Naive thymus-derived CD4-positive, alpha-beta T cell (primary cell): ENCODE measurements at regions of chr1 and their contacts with region 1.

Region 1: DNA sequence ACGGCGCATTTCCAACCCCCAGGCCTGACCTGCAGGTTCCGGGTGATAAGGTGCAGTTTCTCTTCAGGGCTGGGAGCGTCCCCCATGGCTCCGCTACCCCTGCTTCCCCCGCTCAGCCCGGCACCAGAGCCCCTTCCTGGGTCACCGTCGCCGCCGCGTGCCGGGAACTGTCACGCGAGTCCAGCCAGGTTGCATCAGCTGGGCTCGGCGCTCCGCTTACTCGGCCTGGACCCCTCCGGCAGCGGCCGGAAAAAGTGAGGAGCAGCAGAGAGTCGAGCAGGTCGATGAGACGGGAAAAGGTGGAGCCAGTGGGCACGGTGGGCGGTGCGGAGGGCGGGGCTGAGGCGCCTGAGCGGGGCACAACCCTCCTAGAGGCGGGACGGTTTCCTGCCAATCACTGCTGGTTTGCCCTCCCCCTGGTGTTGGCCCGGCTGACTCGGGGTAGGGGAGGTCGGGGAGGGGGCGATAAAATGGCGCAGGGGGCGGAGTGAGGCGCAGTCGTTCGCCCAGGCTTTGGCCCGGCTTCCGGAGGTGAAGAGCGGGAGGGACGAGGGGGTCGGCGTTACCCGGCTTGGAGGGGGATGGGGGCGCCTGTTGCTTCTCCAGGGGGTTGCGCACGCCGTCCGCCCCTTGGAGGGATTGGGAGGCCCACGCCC is at the starts of genes S100PBP and YARS1:
- DNase-seq: peak; percentile 98 to 100 (median 99)
- ATAC-seq: peak; percentile 99
- H3K4me3 ChIP-seq: peak within 1 kb of the TSS; percentile 86
- H3K4me3 Mint-ChIP-seq: peak within 1 kb of the TSS; percentile 85 to 99 (median 96)
- H3K27ac ChIP-seq: peak within 1 kb of the TSS; percentile 85
- H3K27ac Mint-ChIP-seq: peak within 1 kb of the TSS; percentile 82 to 96 (median 92)
- H3K4me1 ChIP-seq: peaks cover 26 to 36% of the 10 kb centered on the region in 2 donors
- H3K4me1 Mint-ChIP-seq: peaks cover 35 to 72% (median 59%) of the 10 kb centered on the region in 7 donors
- H3K27me3 ChIP-seq: no peaks in the 10 kb centered on the region
- H3K27me3 Mint-ChIP-seq: no peaks in the 10 kb centered on the region
- total RNA-seq, gene S100PBP: 36.3 to 69.0 (median 60.2) TPM
- total RNA-seq, gene YARS1: 70.2 to 175 (median 86.8) TPM

Region 2: GRCh38 chr1:31296486-31297276 is 1520.6 kb before region 1 on chr1 and contains the starts of genes SNRNP40 and ZCCHC17:
- CTCF ChIA-PET with region 1: no interaction called
- POLR2A ChIA-PET with region 1: no interaction called
- intact Hi-C with region 1: loop called in 1 of 2 experiments (anchors 2 kb)
- DNase-seq: peak; percentile 73 to 99 (median 98)
- ATAC-seq: peak; percentile 97
- H3K4me3 ChIP-seq: peak within 1 kb of the TSS; percentile 89
- H3K4me3 Mint-ChIP-seq: no peak within 1 kb of the TSS
- H3K27ac ChIP-seq: peak within 1 kb of the TSS; percentile 92
- H3K27ac Mint-ChIP-seq: peak within 1 kb of the TSS in 1 of 9 donors; percentile 84
- H3K4me1 ChIP-seq: peaks cover 18 to 24% of the 10 kb centered on the region in 2 donors
- H3K4me1 Mint-ChIP-seq: peaks cover 12 to 41% (median 27%) of the 10 kb centered on the region in 7 donors
- H3K27me3 ChIP-seq: no peaks in the 10 kb centered on the region
- H3K27me3 Mint-ChIP-seq: no peaks in the 10 kb centered on the region
- total RNA-seq, gene SNRNP40: 53.5 to 88.5 (median 62.1) TPM
- total RNA-seq, gene ZCCHC17: 10.3 to 23.8 (median 20.1) TPM

Region 3: GRCh38 chr1:32107742-32108661 is 709.3 kb before region 1 on chr1 and contains the start of gene KPNA6:
- CTCF ChIA-PET with region 1: no interaction called
- POLR2A ChIA-PET with region 1: no interaction called
- intact Hi-C with region 1: loop called in 1 of 2 experiments (anchors 5 kb)
- DNase-seq: peak; percentile 75 to 95 (median 93)
- ATAC-seq: peak; percentile 94
- H3K4me3 ChIP-seq: peak within 1 kb of the TSS; percentile 75
- H3K4me3 Mint-ChIP-seq: peak within 1 kb of the TSS; percentile 95 to 100 (median 99)
- H3K27ac ChIP-seq: peak within 1 kb of the TSS; percentile 94
- H3K27ac Mint-ChIP-seq: peak within 1 kb of the TSS; percentile 93 to 99 (median 98)
- H3K4me1 ChIP-seq: peaks cover 37 to 40% of the 10 kb centered on the region in 2 donors
- H3K4me1 Mint-ChIP-seq: peaks cover 27 to 63% (median 47%) of the 10 kb centered on the region in 7 donors
- H3K27me3 ChIP-seq: no peaks in the 10 kb centered on the region
- H3K27me3 Mint-ChIP-seq: no peaks in the 10 kb centered on the region
- total RNA-seq, gene KPNA6: 47.4 to 63.7 (median 51.6) TPM

Region 4: DNA sequence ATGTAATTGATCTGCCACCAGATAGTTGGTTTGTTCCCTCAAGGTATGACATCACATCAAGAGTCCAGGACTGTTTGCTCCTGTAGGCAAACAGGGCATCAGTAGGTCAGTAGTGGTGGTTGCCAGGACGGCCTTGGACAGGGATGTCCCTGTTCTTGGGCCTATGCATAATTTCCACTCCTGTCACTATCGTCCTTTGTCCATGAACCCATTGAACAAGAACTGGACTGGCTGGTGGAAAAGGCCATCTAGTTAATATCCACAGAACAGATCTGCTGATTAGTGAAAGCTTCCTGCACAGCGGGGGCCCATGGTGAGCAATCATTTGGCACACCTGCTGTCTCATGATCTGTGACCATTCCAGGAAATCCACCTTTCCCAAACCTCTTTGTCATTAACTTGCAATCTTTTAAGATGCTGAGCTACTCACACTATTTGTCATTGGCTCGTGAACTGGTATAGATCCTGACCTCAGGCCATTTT is 410.6 kb before region 1 on chr1:
- CTCF ChIA-PET with region 1: no interaction called
- POLR2A ChIA-PET with region 1: no interaction called
- intact Hi-C with region 1: no loop called
- DNase-seq: no peak
- ATAC-seq: no peak
- H3K4me3 ChIP-seq: no peak overlapping the region
- H3K4me3 Mint-ChIP-seq: no peak overlapping the region
- H3K27ac ChIP-seq: no peak overlapping the region
- H3K27ac Mint-ChIP-seq: no peak overlapping the region
- H3K4me1 ChIP-seq: no peaks in the 10 kb centered on the region
- H3K4me1 Mint-ChIP-seq: peaks cover 0 to 3% (median 0%) of the 10 kb centered on the region in 7 donors
- H3K27me3 ChIP-seq: no peaks in the 10 kb centered on the region
- H3K27me3 Mint-ChIP-seq: peaks cover 0 to 17% (median 0%) of the 10 kb centered on the region in 5 donors

Region 5: DNA sequence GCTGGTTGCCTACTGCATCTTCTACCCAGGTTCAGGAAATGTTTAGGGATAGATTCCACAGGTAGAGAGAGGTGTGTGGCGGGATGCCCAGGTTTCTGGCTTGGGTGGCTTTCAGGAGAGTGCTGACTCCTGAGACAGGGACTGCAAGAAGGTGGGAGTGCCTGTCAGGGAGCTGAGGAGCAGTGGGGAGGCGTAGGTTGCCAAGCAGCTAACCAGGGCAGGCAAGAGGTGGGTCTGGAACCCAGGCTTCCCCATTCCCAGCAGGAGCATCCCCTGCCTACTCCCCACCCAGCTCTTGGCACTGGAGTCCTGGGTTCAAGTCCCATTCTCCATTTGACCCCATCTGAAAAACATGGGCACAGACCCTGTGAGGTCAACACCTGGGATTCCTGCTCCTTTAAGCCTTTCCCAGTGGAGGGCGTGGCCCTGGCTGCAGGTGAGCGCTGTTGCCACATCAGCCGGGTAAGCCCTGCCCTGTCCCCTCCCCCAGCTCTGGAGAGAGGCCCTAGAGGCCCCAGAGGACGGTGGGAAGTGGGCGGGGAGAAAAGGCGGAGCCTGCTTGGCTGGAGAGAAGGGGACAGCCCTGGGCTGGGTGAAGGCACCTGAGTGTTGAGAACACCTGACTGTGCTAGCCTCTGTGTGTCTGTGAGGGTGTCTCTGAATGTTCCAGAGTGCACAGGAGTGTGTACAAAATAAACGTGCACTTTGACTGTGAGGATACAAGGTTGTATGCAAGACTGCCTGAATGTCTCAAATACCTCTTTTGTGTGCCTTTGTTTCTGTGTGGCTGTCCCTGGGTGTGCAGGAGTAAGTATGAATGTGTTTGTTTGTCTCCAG is 100.8 kb before region 1 on chr1:
- CTCF ChIA-PET with region 1: no interaction called
- POLR2A ChIA-PET with region 1: no interaction called
- intact Hi-C with region 1: loop called in 1 of 2 experiments (anchors 1 kb)
- DNase-seq: peak in 6 of 9 donors; percentile 18 to 67 (median 28)
- ATAC-seq: peak; percentile 25
- H3K4me3 ChIP-seq: no peak overlapping the region
- H3K4me3 Mint-ChIP-seq: peak overlapping the region in 1 of 10 donors; percentile 30
- H3K27ac ChIP-seq: no peak overlapping the region
- H3K27ac Mint-ChIP-seq: peak overlapping the region in 3 of 9 donors; percentile 13 to 47 (median 41)
- H3K4me1 ChIP-seq: peaks cover 0 to 5% of the 10 kb centered on the region in 2 donors
- H3K4me1 Mint-ChIP-seq: peaks cover 0 to 15% (median 14%) of the 10 kb centered on the region in 7 donors
- H3K27me3 ChIP-seq: no peaks in the 10 kb centered on the region
- H3K27me3 Mint-ChIP-seq: peaks cover 0 to 6% (median 0%) of the 10 kb centered on the region in 5 donors

Region 6: GRCh38 chr1:32801096-32801715 is 16.1 kb before region 1 on chr1:
- CTCF ChIA-PET with region 1: no interaction called
- POLR2A ChIA-PET with region 1: no interaction called
- intact Hi-C with region 1: loop called (anchors 1 kb)
- DNase-seq: peak in 8 of 9 donors; percentile 16 to 57 (median 38)
- ATAC-seq: peak; percentile 80
- H3K4me3 ChIP-seq: no peak overlapping the region
- H3K4me3 Mint-ChIP-seq: peak overlapping the region; percentile 22 to 85 (median 56)
- H3K27ac ChIP-seq: peak overlapping the region; percentile 16
- H3K27ac Mint-ChIP-seq: peak overlapping the region; percentile 22 to 88 (median 77)
- H3K4me1 ChIP-seq: peaks cover 32 to 49% of the 10 kb centered on the region in 2 donors
- H3K4me1 Mint-ChIP-seq: peaks cover 20 to 52% (median 45%) of the 10 kb centered on the region in 7 donors
- H3K27me3 ChIP-seq: no peaks in the 10 kb centered on the region
- H3K27me3 Mint-ChIP-seq: no peaks in the 10 kb centered on the region

Region 7: GRCh38 chr1:33036526-33037503 is 219.5 kb after region 1 on chr1 and contains the start of gene AK2:
- CTCF ChIA-PET with region 1: no interaction called
- POLR2A ChIA-PET with region 1: no interaction called
- intact Hi-C with region 1: loop called (anchors 2 kb)
- DNase-seq: peak; percentile 63 to 91 (median 84)
- ATAC-seq: peak; percentile 100
- H3K4me3 ChIP-seq: peak within 1 kb of the TSS; percentile 70
- H3K4me3 Mint-ChIP-seq: peak within 1 kb of the TSS; percentile 92 to 99 (median 96)
- H3K27ac ChIP-seq: peak within 1 kb of the TSS; percentile 73
- H3K27ac Mint-ChIP-seq: peak within 1 kb of the TSS; percentile 74 to 96 (median 89)
- H3K4me1 ChIP-seq: peaks cover 11 to 24% of the 10 kb centered on the region in 2 donors
- H3K4me1 Mint-ChIP-seq: peaks cover 35 to 50% (median 46%) of the 10 kb centered on the region in 7 donors
- H3K27me3 ChIP-seq: no peaks in the 10 kb centered on the region
- H3K27me3 Mint-ChIP-seq: peaks cover 0 to 1% (median 0%) of the 10 kb centered on the region in 5 donors
- total RNA-seq, gene AK2: 53.8 to 219 (median 90.2) TPM

Region 8: GRCh38 chr1:33349778-33350610 is 532.7 kb after region 1 on chr1:
- CTCF ChIA-PET with region 1: interaction called, 3 read pairs
- POLR2A ChIA-PET with region 1: no interaction called
- intact Hi-C with region 1: loop called in 1 of 2 experiments (anchors 2 kb)
- DNase-seq: peak; percentile 64 to 85 (median 73)
- ATAC-seq: peak; percentile 93
- H3K4me3 ChIP-seq: peak overlapping the region; percentile 96
- H3K4me3 Mint-ChIP-seq: peak overlapping the region; percentile 89 to 95 (median 92)
- H3K27ac ChIP-seq: peak overlapping the region; percentile 69
- H3K27ac Mint-ChIP-seq: peak overlapping the region; percentile 54 to 91 (median 88)
- H3K4me1 ChIP-seq: peaks cover 23 to 25% of the 10 kb centered on the region in 2 donors
- H3K4me1 Mint-ChIP-seq: peaks cover 32 to 51% (median 46%) of the 10 kb centered on the region in 7 donors
- H3K27me3 ChIP-seq: no peaks in the 10 kb centered on the region
- H3K27me3 Mint-ChIP-seq: peaks cover 0 to 7% (median 0%) of the 10 kb centered on the region in 5 donors